HEK293 (cell line): ENCODE measurements at regions of chr7 and their contacts with region 1.

Region 1: GRCh38 chr7:56051339-56052191 is at the starts of genes CCT6A and PSPH:
- H3K4me3 ChIP-seq: peak within 1 kb of the TSS; percentile 91
- H3K27ac ChIP-seq: peak within 1 kb of the TSS; percentile 94
- H3K4me1 ChIP-seq: peaks cover 15% of the 10 kb centered on the region
- CTCF ChIP-seq: no peak

Region 2: DNA sequence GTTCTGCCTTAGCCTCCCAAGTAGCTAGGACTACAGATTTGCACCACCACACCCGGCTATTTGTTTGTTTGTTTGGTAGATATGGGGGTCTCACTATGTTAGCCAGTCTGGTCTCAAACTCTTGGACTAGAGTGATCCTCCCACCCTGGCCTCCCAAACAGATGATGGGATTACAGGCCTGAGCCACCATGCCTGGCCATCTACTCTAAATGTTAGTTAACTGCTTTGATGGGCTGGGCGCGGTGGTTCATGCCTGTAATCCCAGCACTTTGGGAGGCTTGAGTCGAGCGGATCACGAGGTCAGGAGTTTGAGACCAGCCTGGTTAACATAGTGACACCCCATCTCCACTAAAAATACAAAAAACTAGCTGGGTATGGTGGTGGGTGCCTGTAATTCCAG is 263.8 kb before region 1 on chr7:
- CTCF ChIA-PET with region 1: no interaction called
- POLR2A ChIA-PET with region 1: no interaction called
- H3K4me3 ChIP-seq: no peak overlapping the region
- H3K27ac ChIP-seq: no peak overlapping the region
- H3K4me1 ChIP-seq: no peaks in the 10 kb centered on the region
- CTCF ChIP-seq: no peak

Region 3: GRCh38 chr7:56009695-56010094 is 41.9 kb before region 1 on chr7:
- CTCF ChIA-PET with region 1: no interaction called
- POLR2A ChIA-PET with region 1: interaction called, 12 read pairs
- H3K4me3 ChIP-seq: no peak overlapping the region
- H3K27ac ChIP-seq: no peak overlapping the region
- H3K4me1 ChIP-seq: no peaks in the 10 kb centered on the region
- CTCF ChIP-seq: no peak

Region 4: DNA sequence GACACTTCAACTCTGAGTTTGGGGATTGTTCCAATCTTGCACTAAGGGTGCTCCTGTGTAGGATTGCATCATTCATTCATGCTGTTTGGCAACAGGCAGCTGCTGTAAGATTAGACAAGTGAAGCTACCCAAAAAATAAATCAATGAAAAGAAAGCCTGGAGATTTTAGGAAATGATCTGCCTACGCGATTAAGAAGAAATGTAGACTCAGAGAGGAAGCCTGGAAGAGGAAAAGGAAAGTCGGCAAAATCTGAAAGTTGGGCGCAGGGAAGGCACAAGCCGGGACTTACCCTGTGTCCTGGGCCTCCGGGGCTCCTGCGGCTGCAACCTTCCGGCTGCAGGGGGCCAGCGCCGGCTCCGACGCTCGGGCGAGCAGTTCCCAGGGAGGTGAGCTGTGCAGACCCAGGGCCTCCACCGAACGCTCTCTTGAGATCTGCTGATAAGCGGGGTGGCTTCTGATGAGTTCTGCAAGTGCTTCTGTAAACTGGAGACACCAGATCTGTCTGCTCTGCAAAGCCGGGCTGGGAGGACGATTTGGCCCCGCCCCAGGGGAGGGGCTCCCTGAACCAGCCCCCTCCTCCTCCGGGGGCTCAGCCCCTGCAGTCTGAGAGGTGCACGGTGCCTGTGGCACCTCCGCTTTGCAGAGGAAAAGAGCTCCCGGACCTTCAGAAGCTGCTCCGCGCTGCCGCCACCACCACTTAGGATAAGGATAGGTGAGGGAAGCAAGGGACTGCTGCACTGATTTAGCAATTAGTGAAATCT is 17.7 kb before region 1 on chr7:
- CTCF ChIA-PET with region 1: no interaction called
- POLR2A ChIA-PET with region 1: interaction called, 78 read pairs
- H3K4me3 ChIP-seq: peak overlapping the region; percentile 55
- H3K27ac ChIP-seq: peak overlapping the region; percentile 57
- H3K4me1 ChIP-seq: no peaks in the 10 kb centered on the region
- CTCF ChIP-seq: no peak

Region 5: GRCh38 chr7:56063882-56064625 is 12.5 kb after region 1 on chr7 and contains the start of gene SUMF2:
- CTCF ChIA-PET with region 1: interaction called, 3 read pairs
- POLR2A ChIA-PET with region 1: interaction called, 70 read pairs
- H3K4me3 ChIP-seq: peak within 1 kb of the TSS; percentile 90
- H3K27ac ChIP-seq: peak within 1 kb of the TSS; percentile 76
- H3K4me1 ChIP-seq: peaks cover 11% of the 10 kb centered on the region
- CTCF ChIP-seq: peak; percentile 82

Region 6: GRCh38 chr7:56074371-56074791 is 22.8 kb after region 1 on chr7:
- CTCF ChIA-PET with region 1: interaction called, 6 read pairs
- POLR2A ChIA-PET with region 1: interaction called, 11 read pairs
- H3K4me3 ChIP-seq: no peak overlapping the region
- H3K27ac ChIP-seq: no peak overlapping the region
- H3K4me1 ChIP-seq: no peaks in the 10 kb centered on the region
- CTCF ChIP-seq: peak; percentile 72

Region 7: DNA sequence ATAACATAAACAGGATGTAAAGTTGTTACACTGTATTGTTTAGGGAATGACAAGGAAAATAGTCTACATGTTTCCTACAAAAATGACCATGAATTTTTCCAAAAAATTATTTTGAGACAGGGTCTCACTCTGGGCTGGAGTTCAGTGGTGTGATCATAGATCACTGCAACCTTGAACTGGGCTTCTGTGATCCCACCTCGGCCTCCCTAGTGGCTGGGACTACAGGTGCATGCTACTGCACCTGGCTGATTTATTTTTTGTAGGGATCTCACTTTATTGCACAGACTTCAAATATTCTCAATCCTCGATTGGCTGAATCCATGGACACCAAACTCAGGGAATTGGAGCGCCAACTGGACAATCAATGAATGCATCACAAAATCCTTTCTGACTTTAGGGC is 48.1 kb after region 1 on chr7:
- CTCF ChIA-PET with region 1: no interaction called
- POLR2A ChIA-PET with region 1: interaction called, 11 read pairs
- H3K4me3 ChIP-seq: no peak overlapping the region
- H3K27ac ChIP-seq: no peak overlapping the region
- H3K4me1 ChIP-seq: no peaks in the 10 kb centered on the region
- CTCF ChIP-seq: no peak

Region 8: DNA sequence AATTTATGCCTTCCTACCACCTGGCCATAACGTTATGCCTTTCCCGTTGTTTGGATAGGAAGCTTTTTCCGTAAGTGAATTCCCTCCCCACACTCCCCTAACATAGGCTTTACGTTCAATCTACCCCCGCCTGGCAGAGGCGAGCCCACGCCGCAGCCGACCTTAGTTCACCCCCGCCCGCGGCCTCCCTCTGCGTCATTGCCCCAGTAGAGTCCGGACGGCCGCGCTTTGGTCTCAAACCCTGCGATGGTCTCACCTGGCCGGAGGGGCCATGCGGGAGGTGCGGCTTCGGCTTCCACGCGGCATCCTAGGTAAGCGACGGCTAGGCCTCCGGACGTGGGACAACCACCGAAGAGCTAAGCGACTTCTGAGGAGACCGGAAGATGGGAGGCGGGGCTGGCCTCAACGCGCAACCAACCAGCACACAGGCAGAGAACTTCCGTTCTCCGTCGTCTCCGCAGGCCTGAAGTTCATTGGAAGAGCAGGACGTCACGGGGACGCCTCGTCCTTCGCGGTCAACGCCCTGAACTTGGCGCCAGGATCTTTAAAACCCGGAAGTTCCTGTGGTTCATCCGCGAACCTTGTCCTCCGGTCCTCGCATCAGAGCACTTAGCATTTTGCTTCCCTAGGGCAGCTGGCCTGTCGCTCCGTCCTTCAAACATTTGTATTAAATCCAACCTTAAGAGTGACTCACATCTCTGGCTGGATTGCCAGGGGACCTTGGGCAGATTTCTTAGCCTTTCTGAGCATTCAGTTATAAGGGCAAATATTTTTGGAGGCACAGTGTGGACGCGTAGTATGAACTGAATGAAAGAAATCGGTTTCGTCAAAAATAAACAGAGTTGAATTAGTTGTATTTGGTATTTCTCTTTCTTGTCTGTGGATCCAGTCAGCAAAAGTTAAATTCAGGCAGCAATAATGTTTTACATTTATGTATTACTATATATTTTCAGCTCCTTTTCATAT is 54.8 kb after region 1 on chr7 and contains the start of gene CHCHD2:
- CTCF ChIA-PET with region 1: no interaction called
- POLR2A ChIA-PET with region 1: interaction called, 14 read pairs
- H3K4me3 ChIP-seq: peak within 1 kb of the TSS; percentile 68
- H3K27ac ChIP-seq: peak within 1 kb of the TSS; percentile 58
- H3K4me1 ChIP-seq: no peaks in the 10 kb centered on the region
- CTCF ChIP-seq: no peak

Region 9: DNA sequence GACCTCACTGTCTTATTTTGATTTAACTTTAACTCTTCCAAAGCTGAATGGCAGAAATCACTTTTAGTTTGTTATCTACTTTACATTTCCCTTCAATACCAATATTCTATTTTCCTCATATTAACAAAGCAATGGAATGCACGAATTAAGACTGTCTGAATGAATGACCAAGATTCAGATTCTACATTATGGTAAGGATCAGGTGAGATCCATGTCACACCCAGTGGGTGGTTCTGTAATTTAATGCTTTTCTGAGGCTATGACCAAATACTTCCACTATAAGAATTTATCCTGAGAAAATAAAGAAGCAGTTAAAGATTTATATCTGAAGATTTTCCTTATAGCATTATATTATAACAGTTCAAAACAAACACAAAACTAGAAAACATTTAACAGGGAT is 154.9 kb after region 1 on chr7:
- CTCF ChIA-PET with region 1: no interaction called
- POLR2A ChIA-PET with region 1: no interaction called
- H3K4me3 ChIP-seq: no peak overlapping the region
- H3K27ac ChIP-seq: no peak overlapping the region
- H3K4me1 ChIP-seq: no peaks in the 10 kb centered on the region
- CTCF ChIP-seq: no peak